Colonic mucosa (tissue), 4 donors: ENCODE measurements at regions of chr1 and their contacts with region 1.

Region 1: DNA sequence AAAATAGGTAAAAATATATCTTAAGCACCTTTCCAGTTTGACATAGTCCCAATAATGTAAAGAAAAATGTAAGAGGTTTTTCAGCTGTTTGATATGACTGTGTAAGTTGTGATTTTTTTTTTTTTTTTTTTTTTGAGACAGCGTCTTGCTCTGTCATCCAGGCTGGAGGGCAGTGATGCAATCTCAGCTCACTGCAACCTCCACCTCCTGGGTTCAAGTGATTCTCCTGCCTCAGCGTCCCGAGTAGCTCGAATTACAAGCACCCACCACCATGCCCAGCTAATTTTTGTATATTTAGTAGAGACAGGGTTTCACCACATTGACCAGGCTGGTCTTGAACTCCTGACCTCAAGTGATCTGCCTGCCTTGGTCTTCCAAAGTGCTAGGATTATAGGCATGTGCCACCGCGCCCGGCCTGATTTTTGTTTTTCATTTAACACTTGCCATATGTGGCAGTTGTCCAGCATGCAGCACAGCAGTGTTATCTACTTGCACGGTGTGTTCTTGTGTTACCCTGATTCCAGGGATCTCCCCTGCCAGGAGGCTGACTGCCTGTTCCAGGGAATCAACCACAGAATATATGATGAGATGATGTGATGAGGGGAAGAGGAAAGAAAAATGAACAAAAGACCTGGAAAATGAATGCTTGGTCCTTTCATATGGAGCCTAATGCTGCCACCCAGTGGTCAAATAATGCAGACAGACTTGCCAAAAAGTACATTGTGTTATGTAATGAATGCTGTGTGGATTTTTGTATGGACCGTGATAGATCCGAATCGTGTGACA is 79.0 kb downstream of the RAVER2 start:
- DNase-seq: peak; percentile 82
- H3K4me3 ChIP-seq: no peak overlapping the region
- H3K27ac ChIP-seq: no peak overlapping the region
- H3K4me1 ChIP-seq: no peaks in the 10 kb centered on the region
- H3K27me3 ChIP-seq: no peaks in the 10 kb centered on the region
- CTCF ChIP-seq: peak; percentile 90

Region 2: GRCh38 chr1:64675718-64676345 is 148.1 kb before region 1 on chr1:
- intact Hi-C with region 1: no loop called
- DNase-seq: no peak
- H3K4me3 ChIP-seq: no peak overlapping the region
- H3K27ac ChIP-seq: no peak overlapping the region
- H3K4me1 ChIP-seq: no peaks in the 10 kb centered on the region
- H3K27me3 ChIP-seq: no peaks in the 10 kb centered on the region
- CTCF ChIP-seq: peak; percentile 59

Region 3: DNA sequence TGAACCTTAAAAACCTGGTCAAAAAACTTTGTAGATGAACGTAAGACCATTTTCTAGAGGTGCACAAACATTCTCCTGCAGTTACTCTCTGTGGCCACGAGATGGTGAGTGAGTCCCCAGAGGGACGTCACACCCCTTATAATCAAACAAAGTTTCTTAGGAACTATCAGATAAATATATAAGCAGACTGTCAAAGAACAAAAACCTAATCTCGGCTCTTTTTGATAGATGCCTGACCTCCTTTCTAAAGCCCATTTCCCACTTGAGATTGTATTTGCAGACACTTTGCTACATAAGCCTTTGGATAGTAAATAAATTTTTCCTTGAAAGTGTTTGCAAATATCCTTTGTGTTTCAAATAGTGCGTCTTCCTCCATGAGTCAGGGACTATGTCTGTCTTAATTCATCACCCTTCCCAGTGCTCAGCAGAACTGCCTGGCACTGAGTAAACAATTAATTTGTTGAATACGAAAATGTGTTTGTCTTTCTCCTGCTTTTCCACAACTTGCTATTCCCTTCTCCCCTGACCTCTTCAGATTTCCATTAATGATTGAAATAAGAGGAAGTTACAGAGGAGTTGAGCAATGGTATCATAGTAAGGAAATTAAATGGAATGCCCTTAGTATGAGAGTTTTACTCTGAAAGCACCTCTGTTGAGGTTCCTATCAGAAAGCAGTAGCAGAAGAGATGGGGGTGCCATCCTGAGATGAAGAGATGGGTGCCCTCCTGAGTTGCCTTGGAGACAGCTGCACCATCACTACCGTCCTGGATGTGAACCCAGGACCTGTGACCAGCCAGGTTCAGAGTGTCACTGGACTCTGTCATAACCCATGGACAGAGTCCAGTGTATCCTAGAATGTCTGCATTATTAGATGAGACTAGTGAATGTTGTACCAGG is 136.8 kb before region 1 on chr1:
- intact Hi-C with region 1: loop called (anchors 2 kb)
- DNase-seq: peak; percentile 32
- H3K4me3 ChIP-seq: no peak overlapping the region
- H3K27ac ChIP-seq: no peak overlapping the region
- H3K4me1 ChIP-seq: peaks cover 8% of the 10 kb centered on the region
- H3K27me3 ChIP-seq: no peaks in the 10 kb centered on the region
- CTCF ChIP-seq: peak; percentile 87

Region 4: DNA sequence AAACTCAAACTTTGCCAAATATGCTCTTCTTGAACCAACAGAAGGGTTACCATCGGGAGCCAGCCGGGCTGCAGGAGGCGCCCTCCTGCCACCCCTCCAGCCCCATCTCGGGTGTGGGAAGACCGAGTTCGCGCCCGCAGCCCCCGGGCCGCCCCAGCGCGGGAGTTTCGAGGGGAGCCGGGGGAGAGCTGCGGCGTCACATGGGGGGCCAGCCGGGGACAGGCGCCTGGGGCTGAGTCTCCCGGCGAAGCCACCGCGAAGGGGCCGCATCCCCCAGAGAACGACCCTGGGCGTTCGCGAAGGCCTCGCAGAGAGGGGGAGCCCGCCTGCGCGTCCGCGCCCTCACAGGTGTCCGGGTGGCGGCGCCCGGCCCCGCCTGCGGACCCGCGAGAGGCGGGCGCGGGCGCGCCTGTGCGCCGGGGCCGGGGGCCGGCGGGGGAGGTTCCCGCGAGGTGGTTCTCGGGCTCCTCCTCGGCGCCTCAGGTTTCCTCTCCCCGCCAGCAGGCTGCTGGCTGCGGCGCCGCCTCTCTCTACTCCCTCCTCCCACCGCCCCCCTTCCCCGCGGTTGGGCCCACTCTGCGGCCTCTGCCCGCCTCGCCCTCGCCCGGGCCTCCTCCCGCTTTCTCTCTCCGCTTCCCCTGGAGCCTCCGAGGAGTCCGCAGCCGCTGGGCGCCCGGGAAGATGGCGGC is 79.2 kb before region 1 on chr1 and contains the start of gene RAVER2:
- intact Hi-C with region 1: loop called (anchors 2 kb)
- DNase-seq: peak; percentile 79
- H3K4me3 ChIP-seq: peak within 1 kb of the TSS; percentile 88
- H3K27ac ChIP-seq: peak within 1 kb of the TSS; percentile 89
- H3K4me1 ChIP-seq: no peaks in the 10 kb centered on the region
- H3K27me3 ChIP-seq: no peaks in the 10 kb centered on the region
- CTCF ChIP-seq: peak; percentile 30
- total RNA-seq, gene RAVER2: 43.0 to 58.6 TPM

Region 5: DNA sequence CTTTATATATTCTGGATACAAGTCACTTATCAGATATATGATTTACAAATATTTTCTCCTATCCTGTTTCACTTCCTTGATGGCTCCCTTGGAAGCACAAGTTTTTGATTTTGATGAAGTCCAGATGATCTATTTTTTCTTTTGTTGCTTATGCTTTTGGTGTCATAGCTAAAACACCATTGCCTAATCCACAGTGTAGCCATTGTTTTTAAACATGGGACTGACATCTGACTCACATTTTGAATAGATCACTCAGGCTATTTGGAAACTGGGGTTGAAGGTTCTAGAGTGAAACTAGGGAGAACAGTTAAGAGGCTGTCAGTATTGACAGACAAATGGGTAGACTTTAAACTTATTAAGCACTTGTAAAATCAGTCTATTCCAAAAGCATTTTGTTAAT is 340.7 kb after region 1 on chr1:
- intact Hi-C with region 1: no loop called
- DNase-seq: no peak
- H3K4me3 ChIP-seq: no peak overlapping the region
- H3K27ac ChIP-seq: no peak overlapping the region
- H3K4me1 ChIP-seq: no peaks in the 10 kb centered on the region
- H3K27me3 ChIP-seq: no peaks in the 10 kb centered on the region
- CTCF ChIP-seq: no peak